Spleen (tissue), 13 donors: ENCODE measurements at regions of chr15 and their contacts with region 1.

Region 1: DNA sequence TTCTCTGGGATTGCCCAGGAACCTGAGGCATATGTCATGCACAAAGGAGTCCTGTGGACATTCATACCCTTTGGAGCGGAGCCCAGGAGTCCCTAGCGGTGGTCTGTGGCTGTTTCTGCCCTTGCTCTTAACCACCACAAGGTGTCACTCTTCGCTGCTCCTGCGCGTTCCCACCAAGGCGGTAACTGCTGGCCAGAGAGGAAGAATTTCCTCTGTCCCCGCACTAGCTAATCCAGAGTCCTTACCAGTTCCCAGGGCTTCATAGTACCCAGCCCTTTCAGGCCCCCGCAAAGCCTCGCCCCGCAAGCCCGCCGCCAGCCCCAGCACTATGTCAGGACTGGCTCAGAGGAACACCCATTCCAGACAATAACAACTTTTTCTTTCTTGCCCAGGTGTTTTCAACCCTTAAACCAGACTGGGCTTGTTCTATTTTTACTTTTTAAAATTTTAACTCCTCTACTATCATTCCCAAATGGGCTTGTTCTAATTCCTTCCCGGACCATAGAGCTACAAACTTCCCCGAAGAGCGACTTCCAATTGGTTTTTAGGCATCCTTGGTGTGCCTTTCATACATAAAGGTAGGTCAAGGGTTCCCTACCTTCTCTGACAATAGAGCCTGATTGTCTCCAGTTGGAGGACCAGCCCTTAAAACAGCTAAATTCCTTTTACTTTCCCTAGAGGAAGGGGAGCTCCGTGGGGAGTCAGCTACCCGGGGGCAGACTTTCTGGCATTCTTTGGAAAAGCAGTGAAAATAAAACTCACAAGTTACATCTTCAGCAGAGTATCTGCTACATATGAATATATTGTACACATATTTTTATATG is 31.8 kb upstream of the ZNF774 start:
- DNase-seq: peak; percentile 91
- H3K4me3 ChIP-seq: no peak overlapping the region
- H3K27ac ChIP-seq: peak overlapping the region in 1 of 8 donors; percentile 42
- H3K4me1 ChIP-seq: peaks cover 0 to 11% (median 10%) of the 10 kb centered on the region in 6 donors
- H3K27me3 ChIP-seq: no peaks in the 10 kb centered on the region
- CTCF ChIP-seq: peak; percentile 95 to 99 (median 97)
- POLR2A ChIP-seq: no peak

Region 2: GRCh38 chr15:90482124-90483011 is 162.1 kb after region 1 on chr15:
- intact Hi-C with region 1: loop called (anchors 2 kb)
- DNase-seq: no peak
- H3K4me3 ChIP-seq: no peak overlapping the region
- H3K27ac ChIP-seq: peak overlapping the region in 2 of 8 donors; percentile 1 to 31
- H3K4me1 ChIP-seq: peaks cover 0 to 50% (median 33%) of the 10 kb centered on the region in 6 donors
- H3K27me3 ChIP-seq: no peaks in the 10 kb centered on the region
- CTCF ChIP-seq: peak in 10 of 11 experiments; percentile 33 to 82 (median 74)
- POLR2A ChIP-seq: no peak